Activated T-helper 1 cell treated with anti-CD3 and anti-CD28 coated beads, Interleukin-12 subunit alpha, Interleukin-12 subunit beta, Interleukin-2, Interleukin-4 antibody, amounts not matched to agents 30 ng/mL and 10 ng/mL and 1 ng/mL, durations not matched to agents 14 hours and 24 hours and 36 hours (primary cell): ENCODE measurements at regions of chr3 and their contacts with region 1.

Region 1: GRCh38 chr3:169980055-169980454 is 13.4 kb downstream of the SEC62 start:
- DNase-seq: no peak
- H3K4me3 Mint-ChIP-seq: no peak overlapping the region
- H3K27ac Mint-ChIP-seq: peak overlapping the region; percentile 35
- H3K4me1 Mint-ChIP-seq: peaks cover 9% of the 10 kb centered on the region
- H3K27me3 Mint-ChIP-seq: no peaks in the 10 kb centered on the region

Region 2: DNA sequence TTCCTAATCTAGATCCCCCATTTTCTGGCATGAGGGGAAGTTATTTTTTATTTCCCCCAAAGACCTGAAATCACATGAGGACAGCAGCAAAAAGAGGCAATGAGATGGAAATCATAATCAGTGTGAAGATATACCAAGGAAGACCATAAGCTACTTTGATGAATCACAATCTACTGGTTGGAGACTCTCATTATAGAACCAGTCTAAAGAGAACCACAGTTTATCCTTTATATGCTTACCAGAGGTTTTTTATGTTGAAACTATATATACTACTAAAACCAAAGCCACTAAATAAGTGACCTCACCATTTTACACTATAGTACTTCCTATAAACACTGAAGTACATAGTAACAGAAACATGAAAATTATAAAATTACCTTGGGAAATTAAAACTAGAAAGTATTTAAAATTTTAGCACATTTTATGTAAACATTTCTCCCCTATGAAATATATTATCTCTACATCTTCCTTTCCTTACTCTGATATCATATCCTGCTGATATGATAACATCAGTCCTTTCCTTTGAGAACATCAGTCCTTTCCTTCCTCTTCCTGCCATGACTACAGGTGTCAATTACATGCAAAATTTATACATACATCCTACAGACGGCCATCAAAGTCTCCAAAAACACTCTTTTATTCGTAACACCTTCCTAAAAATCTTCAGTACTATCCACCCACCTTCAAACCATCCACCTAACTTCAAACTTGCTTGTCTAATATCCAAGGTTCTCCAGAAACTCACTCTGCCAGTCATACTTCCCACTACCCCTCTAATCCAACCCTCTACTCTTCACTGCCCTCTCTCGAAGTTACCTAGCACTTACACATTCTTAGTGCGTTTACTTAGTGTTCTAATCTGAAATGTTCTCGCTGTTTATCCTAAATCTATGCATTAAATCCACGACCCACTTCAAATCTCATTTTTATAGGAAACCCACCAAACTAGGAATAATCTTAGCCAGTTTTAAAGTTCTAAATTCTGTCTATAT is 129.8 kb after region 1 on chr3:
- intact Hi-C with region 1: loop called (anchors 5 kb)
- DNase-seq: no peak
- H3K4me3 Mint-ChIP-seq: no peak overlapping the region
- H3K27ac Mint-ChIP-seq: peak overlapping the region; percentile 3
- H3K4me1 Mint-ChIP-seq: peaks cover 13% of the 10 kb centered on the region
- H3K27me3 Mint-ChIP-seq: no peaks in the 10 kb centered on the region